Transverse colon (tissue), 4 donors: ENCODE measurements at regions of chr7 and their contacts with region 1.

Region 1: GRCh38 chr7:159240962-159241361 is 96.3 kb upstream of the VIPR2 start:
- DNase-seq: no peak
- H3K4me3 ChIP-seq: no peak overlapping the region
- H3K27ac ChIP-seq: no peak overlapping the region
- H3K4me1 ChIP-seq: no peaks in the 10 kb centered on the region
- H3K27me3 ChIP-seq: no peaks in the 10 kb centered on the region
- CTCF ChIP-seq: no peak
- EP300 ChIP-seq: no peak
- POLR2A ChIP-seq: no peak

Region 2: GRCh38 chr7:158856883-158857668 is 383.9 kb before region 1 on chr7:
- in situ Hi-C with region 1: no loop called
- intact Hi-C with region 1: no loop called
- DNase-seq: no peak
- H3K4me3 ChIP-seq: peak overlapping the region; percentile 73 to 98 (median 89)
- H3K27ac ChIP-seq: peak overlapping the region; percentile 89 to 97 (median 92)
- H3K4me1 ChIP-seq: peaks cover 0 to 12% (median 6%) of the 10 kb centered on the region in 4 donors
- H3K27me3 ChIP-seq: no peaks in the 10 kb centered on the region
- CTCF ChIP-seq: no peak
- EP300 ChIP-seq: no peak
- POLR2A ChIP-seq: no peak

Region 3: GRCh38 chr7:158880973-158881372 is 360.0 kb before region 1 on chr7:
- in situ Hi-C with region 1: no loop called
- intact Hi-C with region 1: loop called (anchors 5 kb)
- DNase-seq: no peak
- H3K4me3 ChIP-seq: no peak overlapping the region
- H3K27ac ChIP-seq: no peak overlapping the region
- H3K4me1 ChIP-seq: no peaks in the 10 kb centered on the region
- H3K27me3 ChIP-seq: no peaks in the 10 kb centered on the region
- CTCF ChIP-seq: no peak
- EP300 ChIP-seq: no peak
- POLR2A ChIP-seq: no peak

Region 4: DNA sequence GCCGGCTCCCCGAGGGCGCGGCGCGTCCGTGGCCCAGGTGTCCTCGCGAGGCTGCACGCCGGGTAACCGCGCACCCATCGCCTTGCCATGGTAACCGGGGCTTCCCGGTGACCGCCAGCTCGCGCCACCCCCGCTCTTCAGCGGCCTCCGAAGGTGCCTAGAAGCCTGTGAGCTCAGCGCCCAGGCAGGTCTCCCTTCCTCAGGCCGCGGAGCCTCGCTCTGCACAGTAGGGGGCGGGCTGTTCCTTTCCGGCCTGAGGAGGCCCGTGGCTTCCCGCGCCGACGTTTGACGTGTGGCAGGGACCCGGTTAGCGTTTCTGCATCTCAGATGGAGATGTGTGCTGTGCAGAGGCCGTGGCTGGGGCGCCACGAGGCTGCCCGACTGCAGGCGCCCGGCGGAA is 267.5 kb before region 1 on chr7:
- in situ Hi-C with region 1: no loop called
- intact Hi-C with region 1: no loop called
- DNase-seq: peak; percentile 29
- H3K4me3 ChIP-seq: peak overlapping the region in 1 of 4 donors; percentile 30
- H3K27ac ChIP-seq: no peak overlapping the region
- H3K4me1 ChIP-seq: peaks cover 6 to 16% (median 12%) of the 10 kb centered on the region in 4 donors
- H3K27me3 ChIP-seq: no peaks in the 10 kb centered on the region
- CTCF ChIP-seq: peak in 4 of 5 experiments; percentile 16 to 41 (median 26)
- EP300 ChIP-seq: no peak
- POLR2A ChIP-seq: no peak